CD4-positive, alpha-beta T cell (primary cell): ENCODE measurements at regions of chr22 and their contacts with region 1.

Region 1: GRCh38 chr22:17501679-17502285 is 61.5 kb upstream of the SLC25A18 start:
- DNase-seq: peak in 9 of 14 experiments; percentile 2 to 79 (median 10)
- ATAC-seq: peak; percentile 76
- H3K4me3 ChIP-seq: no peak overlapping the region
- H3K4me3 Mint-ChIP-seq: no peak overlapping the region
- H3K27ac ChIP-seq: no peak overlapping the region
- H3K27ac Mint-ChIP-seq: no peak overlapping the region
- H3K4me1 ChIP-seq: no peaks in the 10 kb centered on the region
- H3K4me1 Mint-ChIP-seq: no peaks in the 10 kb centered on the region
- H3K27me3 ChIP-seq: peaks cover 0 to 2% of the 10 kb centered on the region in 2 experiments
- H3K27me3 Mint-ChIP-seq: peaks cover 4% of the 10 kb centered on the region
- CTCF ChIP-seq: peak; percentile 82

Region 2: DNA sequence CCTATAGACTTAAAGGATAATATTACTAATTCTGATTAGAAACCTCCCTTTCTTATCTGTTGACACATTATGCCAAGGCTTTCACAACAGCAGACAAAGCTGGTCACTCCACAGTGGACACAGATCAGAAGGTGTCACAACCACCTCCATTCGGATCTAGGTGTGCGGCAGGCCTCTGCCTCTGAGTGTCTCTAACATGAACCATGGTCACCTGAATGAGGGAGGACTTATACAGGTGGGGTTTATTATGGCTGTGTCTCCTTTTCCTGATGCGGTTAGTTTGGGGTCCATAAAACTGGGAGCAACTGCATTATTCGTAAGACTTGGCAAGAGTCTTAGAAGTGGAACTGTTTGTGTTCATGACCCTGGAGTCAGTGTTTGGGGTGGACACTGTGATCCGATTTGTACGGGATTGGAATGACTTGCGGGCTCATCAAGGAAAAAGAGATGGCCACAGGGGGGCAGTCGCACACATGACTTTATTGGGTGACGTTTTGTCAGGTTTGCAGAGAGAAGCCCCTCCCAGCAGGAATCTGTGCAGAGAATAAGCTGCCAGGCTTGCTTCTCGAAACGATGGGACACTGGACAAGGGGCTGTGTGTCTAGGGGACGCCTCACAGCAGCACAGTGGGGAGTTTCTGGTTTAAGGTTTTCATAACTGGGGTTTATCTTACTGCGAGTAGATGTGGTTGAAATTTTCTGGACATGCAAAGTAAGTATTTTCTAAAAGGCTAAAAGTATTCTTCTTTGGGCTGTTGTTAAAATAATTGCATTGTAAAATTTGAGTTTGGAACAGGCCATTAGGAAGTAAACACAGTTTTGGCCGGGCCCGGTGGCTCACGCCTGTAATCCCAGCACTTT is 584.4 kb before region 1 on chr22:
- CTCF ChIA-PET with region 1: no interaction called
- POLR2A ChIA-PET with region 1: no interaction called
- intact Hi-C with region 1: loop called in 1 of 2 experiments (anchors 5 kb)
- DNase-seq: peak; percentile 9 to 61 (median 36)
- ATAC-seq: no peak
- H3K4me3 ChIP-seq: no peak overlapping the region
- H3K4me3 Mint-ChIP-seq: no peak overlapping the region
- H3K27ac ChIP-seq: no peak overlapping the region
- H3K27ac Mint-ChIP-seq: no peak overlapping the region
- H3K4me1 ChIP-seq: no peaks in the 10 kb centered on the region
- H3K4me1 Mint-ChIP-seq: no peaks in the 10 kb centered on the region
- H3K27me3 ChIP-seq: peaks cover 5 to 19% of the 10 kb centered on the region in 2 experiments
- H3K27me3 Mint-ChIP-seq: peaks cover 61% of the 10 kb centered on the region
- CTCF ChIP-seq: peak; percentile 45

Region 3: GRCh38 chr22:17077255-17077654 is 424.5 kb before region 1 on chr22:
- CTCF ChIA-PET with region 1: interaction called, 33 read pairs
- POLR2A ChIA-PET with region 1: interaction called, 14 read pairs
- intact Hi-C with region 1: loop called in 1 of 2 experiments (anchors 1 kb)
- DNase-seq: no peak
- ATAC-seq: no peak
- H3K4me3 ChIP-seq: no peak overlapping the region
- H3K4me3 Mint-ChIP-seq: no peak overlapping the region
- H3K27ac ChIP-seq: no peak overlapping the region
- H3K27ac Mint-ChIP-seq: no peak overlapping the region
- H3K4me1 ChIP-seq: peaks cover 11% of the 10 kb centered on the region
- H3K4me1 Mint-ChIP-seq: peaks cover 17% of the 10 kb centered on the region
- H3K27me3 ChIP-seq: no peaks in the 10 kb centered on the region
- H3K27me3 Mint-ChIP-seq: no peaks in the 10 kb centered on the region
- CTCF ChIP-seq: no peak